ENCODE measurements at regions of chr6 and their contacts with region 1.

Region 1: GRCh38 chr6:3023663-3024483 is 24.2 kb downstream of the NQO2 start:
- DNase-seq: peak; percentile 96 to 100 (median 96)
- ATAC-seq: peak; percentile 90
- H3K4me3 ChIP-seq: peak overlapping the region; percentile 75
- H3K27ac ChIP-seq: peak overlapping the region; percentile 98
- H3K4me1 ChIP-seq: peaks cover 32 to 46% of the 10 kb centered on the region in 2 experiments
- H3K27me3 ChIP-seq: no peaks in the 10 kb centered on the region
- CTCF ChIP-seq: 0 out of 6 replicates have a peak, but pooled peaks of 1 of the 3 experiments have one; percentile 2
- EP300 ChIP-seq: peak; percentile 96
- POLR2A ChIP-seq: peak; percentile 98
- RAD21 ChIP-seq: peak; percentile 20 to 39

Region 2: DNA sequence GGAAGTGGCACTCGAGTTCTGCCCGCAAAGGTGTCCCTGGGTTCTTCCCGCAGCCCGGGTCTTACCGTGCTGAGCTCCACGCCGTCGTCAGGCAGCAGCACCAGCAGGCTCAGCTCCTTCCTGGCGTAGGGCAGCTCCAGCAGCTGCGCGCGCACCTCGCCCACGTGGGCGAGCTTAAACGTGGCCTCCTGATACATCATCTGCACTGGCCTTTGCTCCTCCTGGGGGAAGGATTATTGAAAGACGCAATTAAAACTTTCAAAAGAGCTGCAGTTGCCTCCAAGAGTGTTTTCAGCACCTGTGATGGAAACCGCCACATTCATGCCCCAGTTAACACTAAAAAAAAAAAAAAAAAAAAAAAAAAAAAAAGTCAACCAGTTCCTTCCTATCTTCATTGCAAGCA is 132.1 kb before region 1 on chr6:
- CTCF ChIA-PET with region 1: no interaction called
- POLR2A ChIA-PET with region 1: no interaction called
- in situ Hi-C with region 1: no loop called
- intact Hi-C with region 1: no loop called
- DNase-seq: no peak
- ATAC-seq: no peak
- H3K4me3 ChIP-seq: no peak overlapping the region
- H3K27ac ChIP-seq: no peak overlapping the region
- H3K4me1 ChIP-seq: no peaks in the 10 kb centered on the region; a peak in 1 of 5 replicates
- H3K27me3 ChIP-seq: no peaks in the 10 kb centered on the region
- CTCF ChIP-seq: no peak
- EP300 ChIP-seq: no peak
- POLR2A ChIP-seq: no peak
- RAD21 ChIP-seq: no peak

Region 3: GRCh38 chr6:2931970-2932748 is 91.7 kb before region 1 on chr6:
- CTCF ChIA-PET with region 1: no interaction called
- POLR2A ChIA-PET with region 1: no interaction called
- in situ Hi-C with region 1: no loop called
- intact Hi-C with region 1: no loop called
- DNase-seq: peak; percentile 94 to 97 (median 94)
- ATAC-seq: peak; percentile 99
- H3K4me3 ChIP-seq: no peak overlapping the region
- H3K27ac ChIP-seq: 0 out of 3 replicates have a peak overlapping the region, but pooled peaks have one; percentile 2
- H3K4me1 ChIP-seq: peaks cover 9 to 13% of the 10 kb centered on the region in 2 experiments; a peak in 4 of 5 replicates
- H3K27me3 ChIP-seq: no peaks in the 10 kb centered on the region
- CTCF ChIP-seq: peak; percentile 98 to 100 (median 99)
- EP300 ChIP-seq: peak; percentile 97
- POLR2A ChIP-seq: no peak
- RAD21 ChIP-seq: peak; percentile 98

Region 4: GRCh38 chr6:3013479-3013878 is 10.4 kb before region 1 on chr6:
- CTCF ChIA-PET with region 1: no interaction called
- POLR2A ChIA-PET with region 1: interaction called, 23 read pairs
- in situ Hi-C with region 1: no loop called
- intact Hi-C with region 1: no loop called
- DNase-seq: peak in 1 of 4 experiments; percentile 11
- ATAC-seq: no peak
- H3K4me3 ChIP-seq: no peak overlapping the region
- H3K27ac ChIP-seq: no peak overlapping the region
- H3K4me1 ChIP-seq: peaks cover 0 to 4% of the 10 kb centered on the region in 2 experiments; a peak in 1 of 5 replicates
- H3K27me3 ChIP-seq: no peaks in the 10 kb centered on the region
- CTCF ChIP-seq: no peak
- EP300 ChIP-seq: no peak
- POLR2A ChIP-seq: no peak
- RAD21 ChIP-seq: no peak

Region 5: GRCh38 chr6:3039384-3039783 is 15.5 kb after region 1 on chr6:
- CTCF ChIA-PET with region 1: interaction called, 3 read pairs
- POLR2A ChIA-PET with region 1: interaction called, 50 read pairs
- in situ Hi-C with region 1: no loop called
- intact Hi-C with region 1: no loop called
- DNase-seq: no peak
- ATAC-seq: no peak
- H3K4me3 ChIP-seq: no peak overlapping the region
- H3K27ac ChIP-seq: no peak overlapping the region
- H3K4me1 ChIP-seq: no peaks in the 10 kb centered on the region; a peak in 1 of 5 replicates
- H3K27me3 ChIP-seq: no peaks in the 10 kb centered on the region
- CTCF ChIP-seq: no peak
- EP300 ChIP-seq: no peak
- POLR2A ChIP-seq: no peak
- RAD21 ChIP-seq: no peak

Measured in K562 (cell line).